ENCODE measurements at regions of chr17 and their contacts with region 1.

Region 1: GRCh38 chr17:80101011-80101945 is at the start of gene GAA:
- DNase-seq: peak; percentile 93
- ATAC-seq: peak; percentile 89
- H3K4me3 ChIP-seq: peak within 1 kb of the TSS; percentile 64 to 88 (median 84)
- H3K4me3 Mint-ChIP-seq: peak within 1 kb of the TSS; percentile 90
- H3K27ac ChIP-seq: peak within 1 kb of the TSS; percentile 65 to 81
- H3K27ac Mint-ChIP-seq: peak within 1 kb of the TSS; percentile 91
- H3K4me1 ChIP-seq: peaks cover 14 to 22% of the 10 kb centered on the region in 2 donors
- H3K4me1 Mint-ChIP-seq: peaks cover 24% of the 10 kb centered on the region
- H3K27me3 ChIP-seq: peaks cover 0 to 3% (median 0%) of the 10 kb centered on the region in 4 experiments
- H3K27me3 Mint-ChIP-seq: no peaks in the 10 kb centered on the region
- CTCF ChIP-seq: peak; percentile 86
- total RNA-seq, gene GAA: 39.4 and 40.0 TPM in 2 replicates

Region 2: DNA sequence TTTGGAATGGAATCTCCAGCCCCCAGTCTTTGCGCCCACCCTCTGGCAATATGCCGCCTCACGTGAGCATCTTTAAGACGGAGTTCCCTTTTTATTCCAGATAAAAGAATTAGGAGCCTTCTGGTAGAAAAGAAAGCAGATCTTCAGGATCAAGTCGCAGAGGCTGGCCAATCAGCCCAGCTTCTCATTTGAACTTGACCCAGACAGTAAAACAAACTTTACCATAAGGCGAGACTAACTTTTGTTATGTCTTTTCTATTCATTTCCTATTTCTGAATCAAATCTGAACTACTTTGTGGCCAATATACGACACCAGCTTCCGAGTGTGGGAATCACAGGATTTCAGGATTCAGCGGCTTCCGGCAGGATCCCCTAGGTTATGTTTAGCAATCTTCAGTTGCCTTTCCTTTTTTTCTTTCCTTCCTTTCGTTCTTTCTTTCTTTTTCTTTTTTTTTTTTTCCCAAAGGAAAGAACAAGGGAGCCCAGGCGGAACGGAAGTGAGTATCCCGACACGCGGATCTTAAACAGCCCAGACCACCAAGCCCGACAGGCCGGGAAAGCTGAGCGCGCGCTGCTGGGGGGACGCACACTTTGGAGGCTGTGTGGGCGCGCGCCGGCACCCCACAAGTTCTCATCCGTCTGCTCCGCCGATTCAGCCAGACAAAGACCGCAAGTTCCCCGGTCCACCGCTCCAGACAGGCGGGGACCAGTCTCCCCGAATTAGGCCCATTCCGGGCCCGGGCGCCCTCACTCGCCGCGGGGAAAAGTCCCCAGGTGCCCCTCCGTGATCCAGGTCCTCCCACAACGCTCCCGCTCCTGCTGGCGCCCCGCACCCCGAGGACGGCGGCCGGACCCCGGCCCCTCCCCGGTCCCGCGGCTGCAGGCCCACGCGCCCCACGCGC is 66.2 kb before region 1 on chr17:
- CTCF ChIA-PET with region 1: no interaction called
- POLR2A ChIA-PET with region 1: no interaction called
- intact Hi-C with region 1: no loop called
- DNase-seq: peak; percentile 85
- ATAC-seq: peak; percentile 19
- H3K4me3 ChIP-seq: peak overlapping the region in 4 of 5 experiments; percentile 54 to 67 (median 58)
- H3K4me3 Mint-ChIP-seq: peak overlapping the region; percentile 88
- H3K27ac ChIP-seq: peak overlapping the region in 1 of 2 donors; percentile 50
- H3K27ac Mint-ChIP-seq: peak overlapping the region; percentile 89
- H3K4me1 ChIP-seq: peaks cover 15 to 22% of the 10 kb centered on the region in 2 donors
- H3K4me1 Mint-ChIP-seq: peaks cover 11% of the 10 kb centered on the region
- H3K27me3 ChIP-seq: peaks cover 0 to 14% (median 1%) of the 10 kb centered on the region in 4 experiments
- H3K27me3 Mint-ChIP-seq: peaks cover 10% of the 10 kb centered on the region
- CTCF ChIP-seq: no peak

Region 3: GRCh38 chr17:80147035-80147836 is 46.0 kb after region 1 on chr17 and contains the start of gene EIF4A3:
- CTCF ChIA-PET with region 1: interaction called, 9 read pairs
- POLR2A ChIA-PET with region 1: interaction called, 4 read pairs
- intact Hi-C with region 1: loop called (anchors 1 kb)
- DNase-seq: peak; percentile 99
- ATAC-seq: peak; percentile 90
- H3K4me3 ChIP-seq: peak within 1 kb of the TSS; percentile 61 to 94 (median 79)
- H3K4me3 Mint-ChIP-seq: peak within 1 kb of the TSS; percentile 95
- H3K27ac ChIP-seq: peak within 1 kb of the TSS; percentile 82 to 87
- H3K27ac Mint-ChIP-seq: peak within 1 kb of the TSS; percentile 97
- H3K4me1 ChIP-seq: peaks cover 25 to 37% of the 10 kb centered on the region in 2 donors
- H3K4me1 Mint-ChIP-seq: peaks cover 36% of the 10 kb centered on the region
- H3K27me3 ChIP-seq: no peaks in the 10 kb centered on the region
- H3K27me3 Mint-ChIP-seq: no peaks in the 10 kb centered on the region
- CTCF ChIP-seq: no peak
- total RNA-seq, gene EIF4A3: 83.4 and 86.0 TPM in 2 replicates

Measured in B cell (primary cell).